ENCODE measurements at regions of chr9 and their contacts with region 1.

Region 1: GRCh38 chr9:134455934-134456739 is 129.9 kb downstream of the RXRA start:
- DNase-seq: peak; percentile 96
- H3K4me3 ChIP-seq: no peak overlapping the region
- H3K27ac ChIP-seq: peak overlapping the region; percentile 100
- H3K27me3 ChIP-seq: no peaks in the 10 kb centered on the region
- CTCF ChIP-seq: no peak

Region 2: DNA sequence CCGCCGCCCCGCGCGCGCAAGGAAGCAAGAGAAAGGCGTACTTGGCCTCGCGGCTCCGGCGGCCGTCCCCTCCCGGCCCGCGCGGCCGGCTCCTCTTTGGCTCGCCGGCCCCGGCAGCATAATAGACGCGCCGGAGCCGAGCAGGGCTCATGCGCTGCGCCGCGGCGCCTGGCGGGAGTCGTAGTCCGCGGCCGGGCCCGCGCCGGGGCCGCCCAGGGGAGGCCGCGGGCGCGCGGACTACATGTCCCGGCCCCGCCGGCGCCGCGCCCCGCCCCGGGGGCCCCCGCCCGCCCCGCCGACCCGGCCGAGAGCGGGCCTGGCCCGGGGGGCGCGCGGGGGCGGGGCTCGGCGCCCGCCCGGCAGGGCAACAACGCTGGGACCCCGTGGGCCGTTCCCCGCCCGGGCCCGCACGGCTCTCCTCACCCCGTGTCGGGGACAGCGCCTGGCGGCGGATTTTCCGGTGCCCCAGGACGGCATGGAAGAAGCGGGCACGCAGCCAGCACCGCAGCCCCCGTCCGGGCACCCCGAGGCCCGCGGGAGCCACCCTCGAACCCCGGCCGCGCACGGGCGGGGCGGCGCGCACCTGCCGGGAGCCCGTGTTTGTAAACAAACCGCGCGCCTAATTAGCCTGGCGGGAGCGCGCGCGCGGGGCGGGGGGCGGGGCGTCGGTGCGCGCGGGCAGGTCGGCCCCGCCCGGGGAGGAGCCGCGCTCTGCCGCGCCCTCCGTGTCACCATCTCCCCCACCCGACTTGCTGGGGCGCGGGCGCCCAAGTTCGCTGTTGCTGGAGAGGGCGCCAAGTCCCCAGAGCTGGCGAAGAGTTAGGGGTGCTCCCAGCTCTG is 388.0 kb before region 1 on chr9 and contains the start of gene BRD3:
- CTCF ChIA-PET with region 1: no interaction called
- POLR2A ChIA-PET with region 1: no interaction called
- DNase-seq: peak; percentile 52
- H3K4me3 ChIP-seq: peak within 1 kb of the TSS; percentile 81
- H3K27ac ChIP-seq: no peak within 1 kb of the TSS
- H3K27me3 ChIP-seq: peaks cover 29% of the 10 kb centered on the region
- CTCF ChIP-seq: no peak
- polyA plus RNA-seq, gene BRD3: 7.1 and 7.2 TPM in 2 replicates

Region 3: DNA sequence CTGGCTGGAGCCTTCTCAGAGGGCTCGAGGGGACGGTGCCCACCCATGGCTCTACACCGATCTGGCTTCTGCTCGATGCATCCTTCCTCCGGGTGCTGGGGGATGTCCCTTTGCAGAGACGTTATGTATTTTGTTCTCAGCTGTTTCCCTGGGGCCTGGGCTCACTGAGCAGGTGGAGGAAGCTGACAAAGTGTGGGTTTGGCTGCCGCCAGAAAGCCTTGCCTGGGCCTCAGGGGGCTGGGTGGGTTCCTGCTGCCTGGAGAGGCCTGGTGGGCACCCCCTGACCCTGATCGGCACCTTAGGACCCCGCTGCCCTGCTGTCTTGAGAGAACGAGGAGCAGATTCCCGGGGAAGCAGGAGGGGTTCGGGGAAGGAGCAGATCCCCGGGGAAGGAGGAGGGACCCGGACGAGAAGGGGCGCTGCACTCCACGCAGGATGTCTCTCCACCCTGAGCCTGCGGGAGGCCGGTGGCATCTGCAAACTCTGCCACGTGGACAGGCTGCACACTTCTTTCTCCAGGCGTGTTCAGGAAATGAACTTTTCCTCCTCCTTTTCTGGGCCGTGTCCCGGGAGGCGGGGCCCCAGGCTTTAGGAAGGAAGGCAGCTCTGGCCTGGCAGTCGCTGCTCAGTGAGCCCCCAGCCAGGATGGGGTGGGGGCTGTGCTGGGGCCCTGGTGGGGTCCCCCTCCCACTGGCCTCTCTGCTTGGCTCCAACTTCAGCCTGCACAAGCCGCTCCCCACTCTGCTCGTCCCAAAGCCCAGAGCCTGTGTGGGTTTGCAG is 19.1 kb after region 1 on chr9:
- CTCF ChIA-PET with region 1: interaction called, 3 read pairs
- POLR2A ChIA-PET with region 1: interaction called, 15 read pairs
- DNase-seq: no peak
- H3K4me3 ChIP-seq: no peak overlapping the region
- H3K27ac ChIP-seq: peak overlapping the region; percentile 81
- H3K27me3 ChIP-seq: no peaks in the 10 kb centered on the region
- CTCF ChIP-seq: peak; percentile 31

Region 4: GRCh38 chr9:134492281-134492691 is 36.1 kb after region 1 on chr9:
- CTCF ChIA-PET with region 1: interaction called, 3 read pairs
- POLR2A ChIA-PET with region 1: interaction called, 12 read pairs
- DNase-seq: peak; percentile 87
- H3K4me3 ChIP-seq: no peak overlapping the region
- H3K27ac ChIP-seq: peak overlapping the region; percentile 82
- H3K27me3 ChIP-seq: no peaks in the 10 kb centered on the region
- CTCF ChIP-seq: no peak

Region 5: GRCh38 chr9:134502809-134503211 is 46.7 kb after region 1 on chr9:
- CTCF ChIA-PET with region 1: no interaction called
- POLR2A ChIA-PET with region 1: interaction called, 17 read pairs
- DNase-seq: peak; percentile 97
- H3K4me3 ChIP-seq: no peak overlapping the region
- H3K27ac ChIP-seq: peak overlapping the region; percentile 93
- H3K27me3 ChIP-seq: peaks cover 13% of the 10 kb centered on the region
- CTCF ChIP-seq: peak; percentile 11; the same call in 1 of the 2 replicates

Region 6: DNA sequence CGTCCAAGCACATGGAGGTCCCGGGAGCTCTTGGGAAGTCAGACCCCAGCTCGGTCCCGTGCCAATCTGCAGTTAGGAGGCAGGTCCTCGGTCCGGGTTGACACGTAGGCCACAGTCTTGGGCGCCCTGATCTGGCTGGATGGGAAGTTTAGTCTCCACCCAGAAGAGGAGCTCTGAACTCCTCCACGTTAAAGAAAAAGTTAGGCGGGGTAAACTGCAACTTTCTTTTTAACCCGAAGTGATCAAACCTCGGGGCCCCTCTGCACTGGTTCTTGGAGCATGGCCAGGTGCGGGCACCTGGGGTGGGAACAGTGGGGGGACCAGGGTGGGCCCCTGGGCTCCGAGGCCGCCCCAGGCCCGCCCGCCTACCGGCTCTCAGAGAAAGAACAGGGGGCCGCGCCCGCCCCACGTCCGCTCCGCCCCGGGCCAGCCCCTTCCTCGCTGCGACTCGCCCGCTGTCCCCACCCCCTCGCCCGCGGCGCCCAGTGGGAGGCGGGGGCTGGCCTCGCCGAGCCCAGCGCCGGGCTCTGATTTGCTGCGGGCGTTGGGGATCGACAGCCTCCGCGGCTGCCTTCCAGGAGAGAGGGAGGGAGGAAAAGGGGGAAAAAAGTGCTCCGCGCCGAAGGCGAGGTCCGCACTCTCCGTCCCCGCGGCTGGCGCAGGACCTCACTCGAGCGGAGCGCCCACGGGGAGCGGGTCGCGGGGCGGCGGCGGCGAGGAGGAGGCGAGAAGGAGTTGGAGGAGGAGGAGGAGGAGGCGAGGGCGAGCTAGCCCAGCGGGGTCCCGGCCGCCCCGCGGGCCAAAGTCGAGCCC is 185.2 kb after region 1 on chr9 and contains the start of gene COL5A1:
- CTCF ChIA-PET with region 1: interaction called, 4 read pairs
- POLR2A ChIA-PET with region 1: interaction called, 19 read pairs
- DNase-seq: peak; percentile 74
- H3K4me3 ChIP-seq: peak within 1 kb of the TSS; percentile 85
- H3K27ac ChIP-seq: peak within 1 kb of the TSS; percentile 91
- H3K27me3 ChIP-seq: no peaks in the 10 kb centered on the region
- CTCF ChIP-seq: no peak; the same call in 1 of the 2 replicates
- polyA plus RNA-seq, gene COL5A1: 73.3 and 91.7 TPM in 2 replicates

Region 7: DNA sequence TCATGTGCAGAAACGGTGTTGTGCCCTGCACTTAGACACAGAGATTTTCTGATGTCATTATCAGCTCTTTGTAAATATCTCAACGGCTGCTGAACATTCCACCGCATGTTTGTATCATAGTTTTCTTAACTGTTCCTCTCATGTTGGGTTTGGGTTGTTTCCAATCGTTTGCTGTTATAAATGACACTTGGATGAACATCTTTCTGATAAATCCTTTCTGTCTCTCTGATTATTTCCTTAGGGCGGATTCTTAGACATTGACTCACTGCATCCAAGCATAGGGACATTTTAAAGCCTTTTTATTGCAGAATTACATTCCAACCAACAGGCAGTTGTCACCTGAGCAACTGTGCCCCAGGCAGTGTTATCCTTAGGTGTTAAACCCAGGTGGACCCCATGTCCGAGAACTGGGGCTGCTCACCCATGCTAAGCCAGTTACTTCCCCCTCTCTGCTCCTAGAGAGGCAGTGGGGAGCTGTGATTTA is 213.9 kb after region 1 on chr9:
- CTCF ChIA-PET with region 1: no interaction called
- POLR2A ChIA-PET with region 1: interaction called, 11 read pairs
- DNase-seq: peak; percentile 48
- H3K4me3 ChIP-seq: no peak overlapping the region
- H3K27ac ChIP-seq: no peak overlapping the region
- H3K27me3 ChIP-seq: no peaks in the 10 kb centered on the region
- CTCF ChIP-seq: no peak

Measured in AG04450 (cell line).